Body of pancreas (tissue), 4 donors: ENCODE measurements at regions of chr9 and their contacts with region 1.

Region 1: DNA sequence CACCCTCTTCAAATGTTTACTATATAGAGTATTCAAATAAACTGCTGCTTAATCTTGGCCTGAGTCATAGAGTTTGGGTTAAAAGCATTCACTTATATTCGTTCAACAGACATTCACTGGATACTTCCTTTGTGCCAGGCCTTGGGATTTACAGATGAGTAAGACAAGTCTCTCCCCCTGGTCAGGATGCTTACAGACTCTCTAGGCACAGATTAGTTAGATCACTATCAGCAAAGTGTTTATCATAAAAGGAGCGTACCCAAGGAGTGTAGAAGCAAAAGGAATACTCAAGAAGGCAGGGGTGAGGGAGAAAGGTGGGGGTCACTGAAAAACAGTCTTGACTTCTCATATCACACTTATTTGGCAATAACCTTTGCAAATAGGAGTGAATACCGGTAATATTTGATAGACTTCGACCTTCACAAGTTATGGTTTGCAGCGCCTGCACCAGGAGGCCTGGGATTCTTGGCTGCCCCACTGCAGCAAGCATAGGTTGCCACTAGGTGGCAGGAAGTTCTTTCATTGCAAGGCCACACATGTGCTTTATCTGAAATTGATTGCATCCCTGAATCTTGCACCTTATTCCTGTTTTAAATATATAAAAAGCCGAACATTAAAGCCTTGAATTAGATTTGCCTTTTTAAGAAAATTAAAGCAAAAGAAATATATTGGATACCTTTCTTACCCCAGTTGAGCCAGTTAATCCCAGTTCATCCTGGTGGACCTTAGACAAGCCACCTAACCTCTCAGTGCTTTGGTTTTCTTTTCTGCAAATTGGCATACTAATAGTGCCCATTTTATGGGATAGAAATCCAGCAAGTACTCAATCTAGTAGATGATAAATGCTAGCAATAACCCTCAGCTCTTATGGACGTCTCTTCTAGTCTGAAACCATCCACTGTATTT is 6.5 kb upstream of the TRMT10B start:
- DNase-seq: peak; percentile 71 to 77 (median 72)
- ATAC-seq: peak; percentile 85
- H3K4me3 ChIP-seq: no peak overlapping the region
- H3K27ac ChIP-seq: no peak overlapping the region
- H3K4me1 ChIP-seq: no peaks in the 10 kb centered on the region
- H3K27me3 ChIP-seq: no peaks in the 10 kb centered on the region
- CTCF ChIP-seq: peak; percentile 64 to 99 (median 84)
- POLR2A ChIP-seq: no peak

Region 2: DNA sequence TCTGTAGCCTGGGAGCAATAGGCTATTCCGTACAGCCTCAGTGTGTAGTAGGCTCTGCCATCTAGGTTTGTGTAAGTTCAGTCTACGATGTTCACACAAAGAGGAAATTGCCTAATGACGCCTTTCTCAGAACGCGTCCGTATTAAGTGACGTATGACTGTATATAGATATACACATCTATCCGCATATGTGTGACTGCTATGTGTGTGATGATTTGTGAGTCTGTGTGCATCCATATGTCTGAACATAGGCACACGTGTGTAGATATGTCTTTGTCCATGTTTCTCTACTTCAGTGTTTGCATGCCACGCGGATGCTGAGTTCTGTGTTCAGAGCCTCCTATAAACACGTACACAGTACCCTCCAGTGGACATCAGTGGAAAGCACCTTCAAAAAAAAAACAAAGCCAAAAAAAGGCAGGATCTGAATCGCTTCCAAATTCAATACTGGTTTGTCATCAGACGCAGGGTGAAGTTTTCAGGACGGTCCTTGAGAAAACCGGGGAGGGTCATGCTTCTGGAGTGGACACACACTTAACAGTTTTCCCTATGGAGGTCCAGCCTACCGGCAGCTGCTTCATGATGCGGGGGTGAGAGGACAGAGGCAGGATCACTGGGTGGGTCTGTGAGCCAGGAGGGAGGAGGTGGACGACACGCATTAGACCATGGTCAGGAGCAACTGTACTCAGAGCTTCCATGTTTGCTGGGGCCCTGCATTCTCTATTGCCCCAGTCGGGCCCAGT is 615.9 kb after region 1 on chr9:
- intact Hi-C with region 1: loop called (anchors 10 kb)
- DNase-seq: peak; percentile 56 to 78 (median 74)
- ATAC-seq: peak; percentile 94
- H3K4me3 ChIP-seq: no peak overlapping the region
- H3K27ac ChIP-seq: no peak overlapping the region
- H3K4me1 ChIP-seq: peaks cover 5% of the 10 kb centered on the region
- H3K27me3 ChIP-seq: no peaks in the 10 kb centered on the region
- CTCF ChIP-seq: peak; percentile 34 to 93 (median 78)
- POLR2A ChIP-seq: no peak

Region 3: DNA sequence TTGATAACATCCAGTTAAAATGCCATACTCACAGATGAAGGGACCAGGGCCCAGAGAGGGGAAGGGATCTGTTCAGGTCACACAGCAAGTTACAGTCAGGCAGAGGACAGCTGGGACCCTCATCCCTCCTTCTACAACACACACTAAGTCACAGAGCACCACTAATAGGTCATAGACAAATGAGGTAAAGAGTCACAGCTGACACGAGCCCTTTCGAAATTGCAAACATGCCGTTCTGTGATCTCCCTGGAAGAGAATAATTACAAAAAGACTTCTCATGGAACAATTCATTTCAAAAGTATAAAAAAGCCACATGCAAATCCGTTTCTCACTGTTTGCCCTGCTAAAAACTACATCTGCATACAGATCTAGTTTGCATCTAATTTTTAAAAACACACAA is 661.6 kb after region 1 on chr9:
- intact Hi-C with region 1: loop called (anchors 10 kb)
- DNase-seq: no peak
- ATAC-seq: no peak
- H3K4me3 ChIP-seq: no peak overlapping the region
- H3K27ac ChIP-seq: no peak overlapping the region
- H3K4me1 ChIP-seq: no peaks in the 10 kb centered on the region
- H3K27me3 ChIP-seq: no peaks in the 10 kb centered on the region
- CTCF ChIP-seq: no peak
- POLR2A ChIP-seq: no peak